CD4-positive, alpha-beta T cell (primary cell): ENCODE measurements at regions of chr11 and their contacts with region 1.

Region 1: DNA sequence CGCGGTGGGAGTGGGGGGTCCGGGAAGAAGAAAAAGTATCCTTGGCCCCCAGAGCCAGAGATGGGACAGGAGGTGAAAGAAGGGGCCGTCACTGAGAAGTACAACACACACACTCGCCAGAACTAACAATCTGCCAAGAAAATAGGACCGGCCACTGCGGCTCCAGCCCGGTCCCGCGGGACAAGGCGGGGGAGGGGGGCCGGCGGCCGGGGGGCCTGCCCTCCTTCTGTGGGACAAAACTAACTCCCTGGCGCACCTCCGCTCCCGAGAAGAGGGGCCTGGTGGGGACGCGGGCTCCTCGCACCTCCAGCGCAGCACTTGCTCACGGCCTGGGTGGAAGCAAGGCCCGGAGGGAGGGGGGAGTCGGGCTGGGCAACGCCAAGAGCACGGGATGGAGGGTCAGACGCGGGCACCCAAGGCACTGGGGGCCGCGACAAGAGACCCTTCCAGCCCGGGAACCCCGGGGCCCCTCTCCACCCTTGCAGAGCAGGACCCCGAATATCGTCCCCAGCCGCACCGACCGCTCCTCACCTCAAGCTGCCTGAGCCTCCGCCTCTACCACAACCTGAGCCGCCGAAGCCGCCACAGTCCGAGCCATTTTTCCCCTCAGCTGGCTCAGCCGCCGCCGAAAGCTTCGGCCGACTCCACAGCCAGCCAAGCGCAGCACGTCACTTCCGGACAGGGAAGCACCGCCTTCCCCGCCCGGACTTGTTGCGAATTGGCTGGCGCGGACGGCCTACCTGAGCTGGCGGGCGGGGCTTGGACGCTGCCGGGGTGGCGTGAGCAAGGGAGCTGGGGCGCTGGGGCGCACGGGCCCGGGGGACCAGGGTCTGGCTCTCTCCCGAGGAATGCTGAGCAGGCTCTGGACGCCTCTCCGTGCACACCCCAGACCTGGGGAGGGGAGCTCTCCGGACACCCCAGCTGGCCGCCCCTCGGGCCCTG is at the start of gene PIK3C2A:
- DNase-seq: peak; percentile 86 to 96 (median 93)
- ATAC-seq: peak; percentile 96
- H3K4me3 ChIP-seq: peak within 1 kb of the TSS; percentile 95
- H3K4me3 Mint-ChIP-seq: peak within 1 kb of the TSS; percentile 95
- H3K27ac ChIP-seq: peak within 1 kb of the TSS; percentile 86 to 88
- H3K27ac Mint-ChIP-seq: peak within 1 kb of the TSS; percentile 90
- H3K4me1 ChIP-seq: peaks cover 27% of the 10 kb centered on the region
- H3K4me1 Mint-ChIP-seq: peaks cover 44% of the 10 kb centered on the region
- H3K27me3 ChIP-seq: no peaks in the 10 kb centered on the region
- H3K27me3 Mint-ChIP-seq: no peaks in the 10 kb centered on the region
- CTCF ChIP-seq: no peak
- total RNA-seq, gene PIK3C2A: 39.2 to 43.0 TPM

Region 2: GRCh38 chr11:17077520-17078401 is 129.8 kb before region 1 on chr11 and contains the start of gene RPS13:
- CTCF ChIA-PET with region 1: no interaction called
- POLR2A ChIA-PET with region 1: interaction called, 35 read pairs
- intact Hi-C with region 1: loop called (anchors 2 to 5 kb)
- DNase-seq: peak; percentile 88 to 99 (median 92)
- ATAC-seq: peak; percentile 92
- H3K4me3 ChIP-seq: peak within 1 kb of the TSS; percentile 94
- H3K4me3 Mint-ChIP-seq: peak within 1 kb of the TSS; percentile 92
- H3K27ac ChIP-seq: peak within 1 kb of the TSS; percentile 93 to 94
- H3K27ac Mint-ChIP-seq: peak within 1 kb of the TSS; percentile 95
- H3K4me1 ChIP-seq: peaks cover 28% of the 10 kb centered on the region
- H3K4me1 Mint-ChIP-seq: peaks cover 45% of the 10 kb centered on the region
- H3K27me3 ChIP-seq: no peaks in the 10 kb centered on the region
- H3K27me3 Mint-ChIP-seq: no peaks in the 10 kb centered on the region
- CTCF ChIP-seq: no peak
- total RNA-seq, gene RPS13: 2,215 to 2,217 TPM

Region 3: GRCh38 chr11:17287058-17287457 is 79.5 kb after region 1 on chr11:
- CTCF ChIA-PET with region 1: no interaction called
- POLR2A ChIA-PET with region 1: interaction called, 11 read pairs
- intact Hi-C with region 1: no loop called
- DNase-seq: peak in 3 of 14 experiments; percentile 21 to 47 (median 22)
- ATAC-seq: no peak
- H3K4me3 ChIP-seq: no peak overlapping the region
- H3K4me3 Mint-ChIP-seq: peak overlapping the region; percentile 20
- H3K27ac ChIP-seq: no peak overlapping the region
- H3K27ac Mint-ChIP-seq: peak overlapping the region; percentile 67
- H3K4me1 ChIP-seq: peaks cover 31% of the 10 kb centered on the region
- H3K4me1 Mint-ChIP-seq: peaks cover 57% of the 10 kb centered on the region
- H3K27me3 ChIP-seq: no peaks in the 10 kb centered on the region
- H3K27me3 Mint-ChIP-seq: no peaks in the 10 kb centered on the region
- CTCF ChIP-seq: no peak

Region 4: DNA sequence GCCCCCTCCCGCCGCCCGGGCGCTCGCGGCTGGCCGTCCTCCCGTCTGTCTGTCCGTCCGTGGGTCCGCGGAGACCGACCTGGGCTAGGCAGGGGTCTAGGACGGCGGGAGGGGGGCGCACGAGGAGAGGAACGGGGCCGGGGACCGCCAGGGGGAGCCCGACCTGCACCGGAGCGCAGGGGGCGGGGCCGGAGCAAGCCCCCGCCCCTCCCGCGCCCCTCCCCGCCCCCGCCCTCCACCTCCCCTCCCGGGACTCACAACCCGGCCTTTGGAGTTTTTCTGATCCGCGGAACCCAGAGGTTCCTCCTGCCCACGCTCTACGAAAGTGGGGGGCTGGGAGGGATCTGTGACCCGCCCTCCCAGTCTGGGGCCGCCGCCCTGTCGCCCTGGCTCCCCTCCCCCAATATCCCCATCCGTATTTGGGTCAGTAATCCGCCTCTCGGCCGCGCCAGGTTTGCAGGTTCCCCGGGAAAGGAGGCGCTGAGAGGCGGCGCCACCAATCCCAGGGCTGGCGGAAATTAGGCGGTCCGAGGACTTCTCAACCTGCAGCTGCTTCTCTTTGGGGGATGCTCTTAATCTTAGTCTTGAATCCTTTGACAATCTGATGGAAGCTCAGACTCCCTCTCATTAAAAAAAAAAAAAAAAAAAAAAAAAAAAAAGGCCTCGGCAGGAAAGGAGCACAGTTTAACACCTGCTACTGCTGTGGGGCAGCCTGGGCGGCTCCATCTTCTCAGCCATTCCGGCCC is 181.8 kb after region 1 on chr11:
- CTCF ChIA-PET with region 1: interaction called, 3 read pairs
- POLR2A ChIA-PET with region 1: no interaction called
- intact Hi-C with region 1: loop called in 1 of 2 experiments (anchors 5 kb)
- DNase-seq: peak; percentile 69 to 91 (median 77)
- ATAC-seq: peak; percentile 88
- H3K4me3 ChIP-seq: peak overlapping the region; percentile 62
- H3K4me3 Mint-ChIP-seq: peak overlapping the region; percentile 93
- H3K27ac ChIP-seq: no peak overlapping the region
- H3K27ac Mint-ChIP-seq: peak overlapping the region; percentile 58
- H3K4me1 ChIP-seq: peaks cover 15% of the 10 kb centered on the region
- H3K4me1 Mint-ChIP-seq: no peaks in the 10 kb centered on the region
- H3K27me3 ChIP-seq: no peaks in the 10 kb centered on the region
- H3K27me3 Mint-ChIP-seq: no peaks in the 10 kb centered on the region
- CTCF ChIP-seq: peak; percentile 79

Region 5: GRCh38 chr11:17890325-17890724 is 682.7 kb after region 1 on chr11:
- CTCF ChIA-PET with region 1: no interaction called
- POLR2A ChIA-PET with region 1: no interaction called
- intact Hi-C with region 1: no loop called
- DNase-seq: no peak
- ATAC-seq: no peak
- H3K4me3 ChIP-seq: no peak overlapping the region
- H3K4me3 Mint-ChIP-seq: no peak overlapping the region
- H3K27ac ChIP-seq: no peak overlapping the region
- H3K27ac Mint-ChIP-seq: no peak overlapping the region
- H3K4me1 ChIP-seq: no peaks in the 10 kb centered on the region
- H3K4me1 Mint-ChIP-seq: no peaks in the 10 kb centered on the region
- H3K27me3 ChIP-seq: no peaks in the 10 kb centered on the region
- H3K27me3 Mint-ChIP-seq: no peaks in the 10 kb centered on the region
- CTCF ChIP-seq: no peak

Region 6: GRCh38 chr11:18105802-18106574 is 898.4 kb after region 1 on chr11 and contains the start of gene SAAL1:
- CTCF ChIA-PET with region 1: no interaction called
- POLR2A ChIA-PET with region 1: no interaction called
- intact Hi-C with region 1: loop called in 1 of 2 experiments (anchors 10 kb)
- DNase-seq: peak; percentile 81 to 93 (median 87)
- ATAC-seq: peak; percentile 99
- H3K4me3 ChIP-seq: peak within 1 kb of the TSS; percentile 98
- H3K4me3 Mint-ChIP-seq: peak within 1 kb of the TSS; percentile 98
- H3K27ac ChIP-seq: peak within 1 kb of the TSS; percentile 32 to 43
- H3K27ac Mint-ChIP-seq: peak within 1 kb of the TSS; percentile 81
- H3K4me1 ChIP-seq: peaks cover 17% of the 10 kb centered on the region
- H3K4me1 Mint-ChIP-seq: peaks cover 53% of the 10 kb centered on the region
- H3K27me3 ChIP-seq: no peaks in the 10 kb centered on the region
- H3K27me3 Mint-ChIP-seq: peaks cover 13% of the 10 kb centered on the region
- CTCF ChIP-seq: peak; percentile 89
- total RNA-seq, gene SAAL1: 21.3 to 24.5 TPM

Region 7: DNA sequence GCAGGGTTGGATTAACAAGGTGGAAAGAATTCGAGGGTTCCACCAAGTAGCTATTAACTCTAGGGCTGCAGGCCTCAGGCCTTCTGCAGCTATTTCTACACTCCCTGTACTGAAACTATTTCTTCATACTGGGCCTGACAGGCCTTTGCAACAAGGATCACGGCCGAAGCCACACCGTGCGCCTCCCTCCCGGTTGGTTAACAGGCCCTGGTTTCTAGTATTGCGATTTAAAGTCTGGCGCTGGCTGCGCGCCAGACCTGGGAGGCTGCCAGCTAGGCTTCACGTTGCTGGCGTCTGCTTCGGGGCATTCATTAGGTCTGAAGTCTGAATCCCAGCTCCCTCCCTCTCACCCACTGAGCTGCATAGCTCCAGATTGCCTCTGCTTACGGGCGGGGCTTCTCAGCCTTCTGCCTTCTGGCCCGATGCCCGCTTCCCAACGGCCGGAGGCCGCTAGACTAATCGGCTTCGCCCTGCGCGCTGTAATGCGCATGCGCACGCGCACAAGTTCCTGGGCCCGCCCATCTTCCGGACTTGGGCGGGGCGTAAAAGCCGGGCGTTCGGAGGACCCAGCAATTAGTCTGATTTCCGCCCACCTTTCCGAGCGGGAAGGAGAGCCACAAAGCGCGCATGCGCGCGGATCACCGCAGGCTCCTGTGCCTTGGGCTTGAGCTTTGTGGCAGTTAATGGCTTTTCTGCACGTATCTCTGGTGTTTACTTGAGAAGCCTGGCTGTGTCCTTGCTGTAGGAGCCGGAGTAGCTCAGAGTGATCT is 1188.3 kb after region 1 on chr11:
- CTCF ChIA-PET with region 1: no interaction called
- POLR2A ChIA-PET with region 1: no interaction called
- intact Hi-C with region 1: loop called in 1 of 2 experiments (anchors 5 kb)
- DNase-seq: peak; percentile 84 to 98 (median 92)
- ATAC-seq: peak; percentile 62
- H3K4me3 ChIP-seq: peak overlapping the region; percentile 100
- H3K4me3 Mint-ChIP-seq: peak overlapping the region; percentile 99
- H3K27ac ChIP-seq: peak overlapping the region; percentile 89 to 90
- H3K27ac Mint-ChIP-seq: peak overlapping the region; percentile 99
- H3K4me1 ChIP-seq: peaks cover 50% of the 10 kb centered on the region
- H3K4me1 Mint-ChIP-seq: peaks cover 59% of the 10 kb centered on the region
- H3K27me3 ChIP-seq: no peaks in the 10 kb centered on the region
- H3K27me3 Mint-ChIP-seq: no peaks in the 10 kb centered on the region
- CTCF ChIP-seq: no peak